ENCODE measurements at regions of chr5 and their contacts with region 1.

Region 1: GRCh38 chr5:6576861-6577501 is 55.9 kb downstream of the NSUN2 start:
- DNase-seq: peak in 1 of 2 donors; percentile 32
- H3K4me3 ChIP-seq: no peak overlapping the region
- CTCF ChIP-seq: no peak
- POLR2A ChIP-seq: no peak

Region 2: DNA sequence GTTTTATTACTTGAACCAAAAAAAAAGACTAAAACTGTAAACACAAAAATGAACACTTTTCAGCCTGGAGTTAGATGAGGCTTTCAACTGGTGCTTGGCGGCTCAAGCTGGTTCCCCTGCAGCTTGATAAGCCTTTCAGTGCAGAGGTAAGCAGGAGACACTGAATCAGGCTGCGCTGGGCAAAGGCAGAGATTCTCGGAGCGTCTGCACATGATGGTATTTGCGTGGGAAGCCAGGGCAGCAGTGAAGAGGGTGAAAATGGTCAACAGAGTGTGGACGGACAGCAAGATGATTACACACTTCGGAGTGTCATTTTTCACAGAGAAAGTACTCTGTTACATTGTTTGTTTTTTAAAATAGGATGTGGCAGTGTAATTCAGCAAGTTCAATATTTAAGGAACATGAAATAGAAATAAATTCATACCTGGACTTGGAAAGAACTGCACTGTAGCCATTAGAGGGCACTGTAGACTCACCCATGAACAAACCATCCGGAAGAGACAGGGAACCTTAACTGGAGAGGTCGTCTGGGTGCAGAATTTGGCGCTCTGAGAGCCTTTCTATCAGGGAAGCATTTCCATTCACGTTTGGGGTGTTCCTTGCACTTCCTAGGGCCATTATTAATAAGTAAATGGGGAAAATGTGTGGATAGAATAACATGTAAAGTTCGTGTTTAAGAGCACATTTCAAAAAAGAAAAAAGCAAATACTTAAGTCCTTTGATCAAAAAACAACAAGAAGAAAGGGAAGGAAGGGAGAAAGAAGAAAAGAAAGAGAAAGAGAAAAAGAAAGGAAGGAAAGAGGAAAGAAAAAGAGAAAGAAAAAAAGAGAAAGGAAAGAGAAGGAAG is 1084.7 kb before region 1 on chr5:
- intact Hi-C with region 1: loop called (anchors 10 kb)
- DNase-seq: no peak
- H3K4me3 ChIP-seq: no peak overlapping the region
- CTCF ChIP-seq: no peak
- POLR2A ChIP-seq: no peak

Region 3: DNA sequence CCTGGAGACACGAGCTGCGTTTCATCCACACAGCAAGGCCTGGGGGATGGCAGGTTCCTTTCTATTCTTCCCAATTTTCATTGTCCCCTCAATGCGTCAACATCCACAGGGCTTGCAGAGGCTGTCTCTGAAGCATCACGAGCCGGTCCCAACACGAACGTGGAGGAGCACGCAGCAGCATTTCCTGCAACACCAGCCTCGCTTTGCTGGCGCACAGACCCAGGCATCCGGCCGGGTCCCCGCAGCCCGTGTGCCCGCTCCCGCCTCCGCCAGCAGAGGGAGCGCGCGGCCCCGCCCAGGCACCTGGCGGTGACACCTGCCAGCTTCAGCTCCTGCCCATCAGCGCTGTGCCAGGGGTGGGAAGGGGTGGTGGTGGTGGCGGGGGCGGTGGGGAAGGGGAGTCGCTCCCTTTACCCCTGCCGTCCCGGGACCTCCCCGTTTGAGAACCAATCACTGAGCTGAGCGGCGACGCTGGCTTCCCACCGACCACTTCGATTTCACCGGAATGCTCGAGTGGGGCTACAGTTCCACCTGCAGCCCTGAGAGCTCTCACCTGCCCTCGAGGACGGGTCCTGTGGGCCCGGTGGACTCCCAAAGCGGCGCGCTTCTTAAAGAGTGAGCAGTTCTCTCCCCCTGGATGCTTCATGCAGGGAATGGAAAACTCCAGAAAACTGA is 690.0 kb before region 1 on chr5:
- intact Hi-C with region 1: loop called (anchors 5 kb)
- DNase-seq: no peak
- H3K4me3 ChIP-seq: no peak overlapping the region
- CTCF ChIP-seq: no peak
- POLR2A ChIP-seq: no peak

Region 4: DNA sequence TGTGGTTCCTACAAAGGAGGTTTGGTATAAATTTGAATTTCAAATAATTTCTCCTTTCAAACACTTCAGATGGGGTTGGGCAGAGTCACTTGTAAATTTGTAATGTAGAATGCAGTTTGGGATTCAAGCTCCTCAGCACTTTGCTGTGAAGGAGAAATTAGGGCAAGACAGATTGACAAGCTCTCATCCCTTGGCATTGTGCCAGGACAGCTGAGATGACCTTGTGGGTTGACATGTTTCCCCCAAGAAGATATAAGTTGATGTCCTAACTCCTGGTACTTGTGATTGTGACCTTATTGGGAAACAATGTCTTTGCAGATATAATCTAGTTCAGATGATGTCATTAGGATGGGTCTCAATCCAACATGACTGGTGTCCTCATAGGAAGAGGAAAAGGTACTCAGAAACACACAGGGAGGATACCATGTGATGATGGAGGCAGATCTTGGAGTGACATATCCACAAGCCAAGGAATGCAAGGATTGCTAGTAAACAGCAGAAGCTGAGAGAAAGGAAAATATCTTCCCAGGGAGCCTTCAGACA is 607.0 kb before region 1 on chr5:
- intact Hi-C with region 1: no loop called
- DNase-seq: no peak
- H3K4me3 ChIP-seq: no peak overlapping the region
- CTCF ChIP-seq: no peak
- POLR2A ChIP-seq: no peak

Region 5: GRCh38 chr5:6545770-6546690 is 31.0 kb before region 1 on chr5:
- intact Hi-C with region 1: no loop called
- DNase-seq: peak in 1 of 2 donors; percentile 74
- H3K4me3 ChIP-seq: no peak overlapping the region
- CTCF ChIP-seq: no peak
- POLR2A ChIP-seq: no peak

Measured in lower leg skin (tissue), 4 donors.